ENCODE measurements at regions of chr18 and their contacts with region 1.

Region 1: GRCh38 chr18:3869848-3870247 is 419.9 kb downstream of the TGIF1 start:
- DNase-seq: peak; percentile 88

Region 2: DNA sequence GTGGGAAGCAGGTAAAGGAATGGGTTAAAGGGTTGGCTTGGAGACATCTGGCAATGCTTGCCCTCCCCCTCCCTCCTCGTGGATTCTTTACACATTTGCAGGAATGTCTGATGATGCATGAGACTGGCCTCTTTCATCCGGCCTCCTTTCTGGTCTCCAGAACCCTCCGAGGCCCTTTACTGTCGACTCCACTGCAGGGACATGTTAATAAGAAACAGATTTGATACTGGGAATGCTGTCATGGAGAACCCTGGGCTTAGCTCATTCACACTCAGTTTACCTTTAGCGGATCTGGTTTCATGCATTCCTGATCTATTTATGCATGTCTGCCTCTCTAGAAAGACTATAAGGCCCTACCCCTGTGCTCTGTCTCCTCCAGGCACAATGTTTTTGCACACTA is 181.1 kb before region 1 on chr18:
- in situ Hi-C with region 1: loop called (anchors 25 kb)
- DNase-seq: peak; percentile 73